ENCODE measurements at regions of chr16 and their contacts with region 1.

Region 1: GRCh38 chr16:10852948-10853347 is 24.1 kb upstream of the CIITA start:
- DNase-seq: no peak
- ATAC-seq: no peak
- H3K4me3 Mint-ChIP-seq: peak overlapping the region; percentile 32
- H3K27ac Mint-ChIP-seq: peak overlapping the region; percentile 13
- H3K4me1 Mint-ChIP-seq: peaks cover 44% of the 10 kb centered on the region
- H3K27me3 Mint-ChIP-seq: no peaks in the 10 kb centered on the region
- CTCF ChIP-seq: no peak

Region 2: DNA sequence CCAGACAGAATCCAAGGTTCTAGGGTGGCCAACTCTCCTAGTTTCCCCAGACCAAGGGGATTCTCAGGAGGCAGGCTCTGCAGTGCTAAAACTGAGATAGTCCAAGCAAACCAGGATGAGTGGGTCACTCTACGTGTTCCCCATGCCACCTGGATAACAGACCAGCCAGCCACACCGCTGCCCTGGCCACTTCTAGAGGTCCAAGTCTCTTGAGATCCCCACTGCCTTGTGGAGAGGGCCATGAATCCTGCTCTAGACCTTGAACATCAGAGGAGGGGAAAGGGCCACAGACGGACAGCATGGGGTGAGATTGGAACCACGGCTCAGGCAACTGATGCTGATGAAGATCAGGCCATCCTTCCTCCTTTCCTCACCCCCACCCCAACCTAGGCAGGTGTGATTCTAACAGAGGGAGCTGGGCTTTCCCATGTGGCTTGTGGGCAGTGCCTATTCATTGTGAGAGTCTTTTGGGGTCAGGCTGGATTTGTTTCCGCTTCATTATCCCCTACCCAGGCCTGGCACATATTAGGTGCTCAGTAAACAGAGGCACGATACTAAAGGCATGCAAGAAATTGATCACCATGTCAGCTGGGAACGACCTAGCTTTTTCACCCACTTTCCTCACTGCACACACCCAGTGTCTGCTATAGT is 17.5 kb before region 1 on chr16:
- CTCF ChIA-PET with region 1: no interaction called
- POLR2A ChIA-PET with region 1: interaction called, 4 read pairs
- intact Hi-C with region 1: loop called (anchors 2 kb)
- DNase-seq: no peak
- ATAC-seq: peak; percentile 43
- H3K4me3 Mint-ChIP-seq: no peak overlapping the region
- H3K27ac Mint-ChIP-seq: peak overlapping the region; percentile 31
- H3K4me1 Mint-ChIP-seq: peaks cover 62% of the 10 kb centered on the region
- H3K27me3 Mint-ChIP-seq: no peaks in the 10 kb centered on the region
- CTCF ChIP-seq: no peak

Region 3: DNA sequence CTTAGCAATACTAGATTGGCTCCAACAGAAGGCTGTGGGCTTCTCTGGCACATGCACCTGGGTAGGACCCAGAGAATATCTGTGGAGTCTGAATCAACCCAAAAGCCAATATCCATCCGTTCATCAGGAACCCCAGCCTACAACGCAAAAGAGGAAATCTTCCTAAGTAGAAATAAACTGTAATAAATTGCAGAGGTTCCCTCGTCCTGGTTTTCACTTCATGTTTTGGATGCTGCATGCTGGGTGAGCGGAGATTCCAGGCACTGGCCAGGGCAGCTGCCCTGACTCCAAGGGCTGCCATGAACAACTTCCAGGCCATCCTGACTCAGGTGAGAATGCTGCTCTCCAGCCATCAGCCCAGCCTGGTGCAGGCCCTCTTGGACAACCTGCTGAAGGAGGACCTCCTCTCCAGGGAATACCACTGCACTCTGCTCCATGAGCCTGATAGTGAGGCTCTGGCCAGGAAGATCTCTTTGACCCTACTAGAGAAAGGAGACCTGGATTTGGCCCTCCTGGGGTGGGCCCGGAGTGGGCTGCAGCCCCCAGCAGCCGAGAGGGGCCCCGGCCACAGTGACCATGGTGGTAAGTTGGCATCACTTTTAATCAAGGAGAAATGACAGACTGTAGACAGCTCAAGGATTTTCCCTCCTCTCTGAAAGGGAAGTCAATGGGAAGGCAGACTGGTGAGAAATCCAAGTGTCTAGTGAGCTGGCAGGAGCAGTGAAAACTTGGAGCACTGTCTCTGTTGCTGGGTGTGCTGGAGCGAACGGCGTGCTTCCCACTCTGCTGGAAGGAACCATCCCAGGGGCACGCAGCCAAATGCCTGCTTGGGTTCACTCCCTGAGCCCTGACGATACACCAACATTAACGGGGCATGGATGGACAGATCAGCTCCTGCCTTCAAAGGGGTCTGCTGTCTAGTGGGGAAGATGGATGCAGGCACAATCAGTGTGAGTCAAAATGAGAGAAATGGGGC is 13.3 kb after region 1 on chr16:
- CTCF ChIA-PET with region 1: no interaction called
- POLR2A ChIA-PET with region 1: interaction called, 6 read pairs
- intact Hi-C with region 1: loop called (anchors 2 kb)
- DNase-seq: no peak
- ATAC-seq: no peak
- H3K4me3 Mint-ChIP-seq: peak overlapping the region; percentile 22
- H3K27ac Mint-ChIP-seq: peak overlapping the region; percentile 91
- H3K4me1 Mint-ChIP-seq: peaks cover 93% of the 10 kb centered on the region
- H3K27me3 Mint-ChIP-seq: no peaks in the 10 kb centered on the region
- CTCF ChIP-seq: no peak